Sigmoid colon (tissue), 7 donors: ENCODE measurements at regions of chr4 and their contacts with region 1.

Region 1: DNA sequence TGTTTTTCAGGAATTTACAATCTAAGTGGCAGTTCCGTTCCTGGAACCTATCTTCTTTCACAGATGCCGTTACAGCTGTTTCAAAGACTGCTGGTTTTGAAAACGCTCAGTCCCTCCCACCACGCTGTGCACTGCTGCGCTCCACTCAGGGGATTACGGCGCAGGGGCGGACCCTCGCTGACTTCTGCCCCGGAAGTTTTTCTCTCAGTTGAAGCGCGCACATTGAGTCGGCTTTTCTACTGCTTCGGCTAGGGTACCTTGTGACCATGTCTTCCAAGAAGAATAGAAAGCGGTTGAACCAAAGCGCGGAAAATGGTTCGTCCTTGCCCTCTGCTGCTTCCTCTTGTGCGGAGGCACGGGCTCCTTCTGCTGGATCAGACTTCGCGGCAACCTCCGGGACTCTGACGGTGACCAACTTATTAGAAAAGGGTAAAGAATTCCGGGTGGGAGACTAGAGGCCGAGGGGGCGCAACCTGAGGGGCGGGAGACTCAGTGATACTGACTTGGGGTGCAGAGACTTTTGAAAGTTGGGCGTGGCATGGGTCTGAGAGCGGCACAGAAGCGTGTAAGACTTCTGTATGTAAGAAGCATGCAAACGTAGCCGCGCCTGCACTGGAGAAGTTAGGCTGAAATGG is 597 bp upstream of the NUDT6 start:
- DNase-seq: peak; percentile 92
- H3K4me3 ChIP-seq: peak overlapping the region; percentile 63 to 85 (median 72)
- H3K27ac ChIP-seq: peak overlapping the region; percentile 81 to 90 (median 84)
- H3K4me1 ChIP-seq: peaks cover 0 to 21% (median 18%) of the 10 kb centered on the region in 4 donors
- H3K27me3 ChIP-seq: no peaks in the 10 kb centered on the region
- CTCF ChIP-seq: no peak
- EP300 ChIP-seq: no peak
- POLR2A ChIP-seq: no peak

Region 2: GRCh38 chr4:122732329-122733026 is 190.5 kb before region 1 on chr4 and contains the start of gene BBS12:
- intact Hi-C with region 1: loop called (anchors 5 kb)
- DNase-seq: peak; percentile 99
- H3K4me3 ChIP-seq: peak within 1 kb of the TSS; percentile 70 to 74 (median 72)
- H3K27ac ChIP-seq: peak within 1 kb of the TSS; percentile 82 to 88 (median 84)
- H3K4me1 ChIP-seq: peaks cover 0 to 24% (median 10%) of the 10 kb centered on the region in 4 donors
- H3K27me3 ChIP-seq: no peaks in the 10 kb centered on the region
- CTCF ChIP-seq: no peak
- EP300 ChIP-seq: no peak
- POLR2A ChIP-seq: peak in 1 of 2 donors; percentile 41
- total RNA-seq, gene BBS12: 2.2 to 5.1 (median 3.8) TPM

Region 3: DNA sequence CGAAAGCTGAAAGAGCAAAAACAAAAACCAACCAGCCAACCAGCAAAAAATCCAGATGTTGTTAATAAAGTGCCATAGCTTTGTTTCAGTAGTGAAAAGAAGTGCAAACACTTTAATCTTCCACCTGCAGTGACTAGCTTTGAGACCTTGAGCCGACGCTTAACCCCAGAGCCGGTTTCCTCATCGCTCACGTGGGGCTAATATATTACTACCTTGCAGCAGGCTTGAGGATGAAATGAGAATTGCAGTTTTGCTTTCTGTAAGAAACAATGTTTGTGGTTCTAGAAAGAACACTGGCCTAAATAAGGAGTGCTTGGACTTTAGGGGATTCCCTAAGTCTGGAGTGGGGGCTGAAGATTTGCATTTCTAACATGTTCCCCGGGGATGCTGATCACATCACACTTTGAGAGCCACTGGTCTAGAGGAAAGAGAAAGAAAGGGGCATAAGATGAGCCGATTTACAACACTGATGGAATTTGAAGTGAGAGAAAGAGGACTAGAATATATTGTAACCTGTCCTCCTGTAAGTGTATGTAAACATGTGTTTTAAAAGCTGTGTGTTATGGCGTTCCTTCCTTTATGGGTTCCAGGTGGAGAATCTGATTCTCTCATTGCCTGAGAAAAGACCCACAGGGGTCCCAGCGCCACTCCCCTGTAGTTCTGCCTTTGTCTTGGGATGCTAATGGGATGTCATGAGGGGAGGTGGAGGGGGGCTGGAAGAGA is 95.0 kb before region 1 on chr4:
- intact Hi-C with region 1: loop called (anchors 1 kb)
- DNase-seq: peak; percentile 82
- H3K4me3 ChIP-seq: peak overlapping the region; percentile 78 to 88 (median 85)
- H3K27ac ChIP-seq: peak overlapping the region; percentile 93 to 95 (median 94)
- H3K4me1 ChIP-seq: peaks cover 0 to 58% (median 52%) of the 10 kb centered on the region in 4 donors
- H3K27me3 ChIP-seq: no peaks in the 10 kb centered on the region
- CTCF ChIP-seq: peak; percentile 33 to 69 (median 38)
- EP300 ChIP-seq: no peak
- POLR2A ChIP-seq: peak in 1 of 2 donors; percentile 25

Region 4: GRCh38 chr4:123102897-123103471 is 180.0 kb after region 1 on chr4:
- intact Hi-C with region 1: no loop called
- DNase-seq: no peak
- H3K4me3 ChIP-seq: no peak overlapping the region
- H3K27ac ChIP-seq: no peak overlapping the region
- H3K4me1 ChIP-seq: peaks cover 0 to 9% (median 5%) of the 10 kb centered on the region in 4 donors
- H3K27me3 ChIP-seq: no peaks in the 10 kb centered on the region
- CTCF ChIP-seq: peak; percentile 45 to 75 (median 52)
- EP300 ChIP-seq: no peak
- POLR2A ChIP-seq: no peak

Region 5: GRCh38 chr4:124262211-124263179 is 1339.5 kb after region 1 on chr4:
- intact Hi-C with region 1: loop called (anchors 5 kb)
- DNase-seq: peak; percentile 79
- H3K4me3 ChIP-seq: no peak overlapping the region
- H3K27ac ChIP-seq: no peak overlapping the region
- H3K4me1 ChIP-seq: peaks cover 0 to 10% (median 7%) of the 10 kb centered on the region in 4 donors
- H3K27me3 ChIP-seq: no peaks in the 10 kb centered on the region
- CTCF ChIP-seq: peak; percentile 60 to 83 (median 62)
- EP300 ChIP-seq: no peak
- POLR2A ChIP-seq: no peak